H1 (cell line): ENCODE measurements at regions of chr3 and their contacts with region 1.

Region 1: GRCh38 chr3:195238586-195239118 is 32.3 kb downstream of the XXYLT1 start:
- DNase-seq: peak in 1 of 2 experiments; percentile 43
- H3K4me3 ChIP-seq: no peak overlapping the region
- H3K27ac ChIP-seq: no peak overlapping the region; the same call in 1 of the 2 replicates
- H3K4me1 ChIP-seq: peaks cover 0 to 7% (median 4%) of the 10 kb centered on the region in 4 experiments; a peak in 4 of 7 replicates
- H3K27me3 ChIP-seq: no peaks in the 10 kb centered on the region
- CTCF ChIP-seq: no peak
- EP300 ChIP-seq: no peak
- POLR2A ChIP-seq: no peak
- RAD21 ChIP-seq: no peak

Region 2: GRCh38 chr3:195226900-195227447 is 11.7 kb before region 1 on chr3:
- CTCF ChIA-PET with region 1: interaction called, 14 read pairs
- POLR2A ChIA-PET with region 1: interaction called, 4 read pairs
- DNase-seq: peak in 1 of 2 experiments; percentile 45
- H3K4me3 ChIP-seq: no peak overlapping the region
- H3K27ac ChIP-seq: no peak overlapping the region; the same call in 1 of the 2 replicates
- H3K4me1 ChIP-seq: peaks cover 0 to 12% (median 2%) of the 10 kb centered on the region in 4 experiments; a peak in 6 of 7 replicates
- H3K27me3 ChIP-seq: no peaks in the 10 kb centered on the region
- CTCF ChIP-seq: peak; percentile 51 to 78 (median 76)
- EP300 ChIP-seq: no peak
- POLR2A ChIP-seq: no peak
- RAD21 ChIP-seq: peak; percentile 48 to 65